ENCODE measurements at regions of chr4 and their contacts with region 1.

Region 1: GRCh38 chr4:38829237-38829636 is 24.6 kb upstream of the TLR1 start:
- DNase-seq: no peak
- H3K4me3 ChIP-seq: no peak overlapping the region
- H3K27ac ChIP-seq: no peak overlapping the region
- H3K4me1 ChIP-seq: peaks cover 3% of the 10 kb centered on the region
- H3K27me3 ChIP-seq: no peaks in the 10 kb centered on the region
- CTCF ChIP-seq: no peak

Region 2: GRCh38 chr4:38503689-38504395 is 325.4 kb before region 1 on chr4:
- CTCF ChIA-PET with region 1: no interaction called
- dilution Hi-C with region 1: no loop called
- in situ Hi-C with region 1: no loop called
- intact Hi-C with region 1: no loop called
- DNase-seq: no peak
- H3K4me3 ChIP-seq: no peak overlapping the region
- H3K27ac ChIP-seq: no peak overlapping the region
- H3K4me1 ChIP-seq: no peaks in the 10 kb centered on the region
- H3K27me3 ChIP-seq: no peaks in the 10 kb centered on the region
- CTCF ChIP-seq: no peak

Region 3: GRCh38 chr4:38738940-38739803 is 90.1 kb before region 1 on chr4:
- CTCF ChIA-PET with region 1: no interaction called
- dilution Hi-C with region 1: loop called (anchors 5 kb)
- in situ Hi-C with region 1: no loop called
- intact Hi-C with region 1: no loop called
- DNase-seq: no peak
- H3K4me3 ChIP-seq: no peak overlapping the region
- H3K27ac ChIP-seq: no peak overlapping the region
- H3K4me1 ChIP-seq: peaks cover 8% of the 10 kb centered on the region
- H3K27me3 ChIP-seq: no peaks in the 10 kb centered on the region
- CTCF ChIP-seq: no peak

Region 4: GRCh38 chr4:38889143-38889542 is 59.9 kb after region 1 on chr4:
- CTCF ChIA-PET with region 1: no interaction called
- dilution Hi-C with region 1: loop called (anchors 5 kb)
- in situ Hi-C with region 1: no loop called
- intact Hi-C with region 1: no loop called
- DNase-seq: peak; percentile 78
- H3K4me3 ChIP-seq: no peak overlapping the region
- H3K27ac ChIP-seq: peak overlapping the region; percentile 79
- H3K4me1 ChIP-seq: peaks cover 24% of the 10 kb centered on the region
- H3K27me3 ChIP-seq: no peaks in the 10 kb centered on the region
- CTCF ChIP-seq: no peak

Measured in mammary epithelial cell (primary cell).